Breast epithelium (tissue), 4 donors: ENCODE measurements at regions of chr12 and their contacts with region 1.

Region 1: GRCh38 chr12:46627686-46628085 is 198.1 kb downstream of the SLC38A4 start:
- DNase-seq: no peak
- H3K4me3 ChIP-seq: no peak overlapping the region
- H3K27ac ChIP-seq: no peak overlapping the region
- H3K4me1 ChIP-seq: no peaks in the 10 kb centered on the region
- H3K27me3 ChIP-seq: no peaks in the 10 kb centered on the region
- CTCF ChIP-seq: no peak
- POLR2A ChIP-seq: no peak

Region 2: GRCh38 chr12:46523863-46524770 is 103.6 kb before region 1 on chr12:
- intact Hi-C with region 1: no loop called
- DNase-seq: no peak
- H3K4me3 ChIP-seq: no peak overlapping the region
- H3K27ac ChIP-seq: peak overlapping the region in 1 of 2 donors; percentile 66
- H3K4me1 ChIP-seq: no peaks in the 10 kb centered on the region
- H3K27me3 ChIP-seq: no peaks in the 10 kb centered on the region
- CTCF ChIP-seq: no peak
- POLR2A ChIP-seq: no peak

Region 3: GRCh38 chr12:46585854-46586621 is 41.6 kb before region 1 on chr12:
- intact Hi-C with region 1: loop called (anchors 2 kb)
- DNase-seq: no peak
- H3K4me3 ChIP-seq: no peak overlapping the region
- H3K27ac ChIP-seq: no peak overlapping the region
- H3K4me1 ChIP-seq: no peaks in the 10 kb centered on the region
- H3K27me3 ChIP-seq: no peaks in the 10 kb centered on the region
- CTCF ChIP-seq: no peak
- POLR2A ChIP-seq: no peak